Activated CD4-positive, alpha-beta T cell treated with anti-CD3 and anti-CD28 coated beads for 36 hours (primary cell): ENCODE measurements at regions of chr2 and their contacts with region 1.

Region 1: DNA sequence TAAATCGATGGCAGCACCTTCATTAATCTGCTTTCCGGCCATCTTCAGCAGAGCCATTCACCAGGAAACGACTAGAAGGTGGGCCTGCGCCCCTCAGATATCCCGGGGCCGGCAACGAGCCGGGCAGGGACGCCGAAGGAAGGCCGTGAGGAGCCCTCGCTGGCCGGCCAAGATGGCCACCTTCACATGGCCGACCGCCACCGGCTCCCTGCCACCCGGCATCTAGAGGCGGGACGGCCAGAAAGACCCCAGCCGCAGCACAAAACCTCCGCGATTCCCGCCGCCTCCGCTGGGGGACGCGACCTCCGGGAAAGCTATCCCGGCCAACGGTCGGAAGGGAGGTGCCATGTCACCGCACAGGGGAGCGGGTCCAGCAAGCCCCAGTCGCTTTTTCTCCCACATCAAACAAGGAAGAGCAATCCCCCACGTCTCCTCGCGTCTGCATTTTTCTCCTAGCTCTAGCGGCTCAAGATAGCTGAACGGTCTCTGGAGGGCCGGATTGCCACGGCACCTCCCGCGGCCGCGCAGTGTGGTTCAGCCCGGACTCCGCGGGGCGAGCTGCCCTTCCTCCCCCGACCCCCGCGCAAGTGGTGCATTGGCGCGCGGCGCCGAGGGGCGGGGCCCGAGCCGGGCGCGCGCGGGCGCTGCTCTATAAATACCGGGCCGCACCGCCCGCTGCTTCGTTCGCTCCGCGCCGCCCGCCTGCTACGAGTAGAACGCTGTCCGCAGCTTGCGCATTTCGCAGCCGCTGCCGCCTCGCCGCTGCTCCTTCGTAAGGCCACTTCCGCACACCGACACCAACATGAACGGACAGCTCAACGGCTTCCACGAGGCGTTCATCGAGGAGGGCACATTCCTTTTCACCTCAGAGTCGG is at the start of gene MAT2A:
- DNase-seq: peak; percentile 93
- ATAC-seq: peak; percentile 79
- H3K4me3 Mint-ChIP-seq: peak within 1 kb of the TSS; percentile 95
- H3K27ac Mint-ChIP-seq: peak within 1 kb of the TSS; percentile 99
- H3K4me1 Mint-ChIP-seq: peaks cover 43% of the 10 kb centered on the region
- H3K27me3 Mint-ChIP-seq: no peaks in the 10 kb centered on the region
- total RNA-seq, gene MAT2A: 226 to 259 TPM

Region 2: GRCh38 chr2:84654414-84654813 is 884.3 kb before region 1 on chr2:
- CTCF ChIA-PET with region 1: no interaction called
- POLR2A ChIA-PET with region 1: no interaction called
- intact Hi-C with region 1: no loop called
- DNase-seq: no peak
- ATAC-seq: no peak
- H3K4me3 Mint-ChIP-seq: no peak overlapping the region
- H3K27ac Mint-ChIP-seq: no peak overlapping the region
- H3K4me1 Mint-ChIP-seq: peaks cover 58% of the 10 kb centered on the region
- H3K27me3 Mint-ChIP-seq: no peaks in the 10 kb centered on the region

Region 3: GRCh38 chr2:84905181-84906107 is 633.3 kb before region 1 on chr2 and contains the start of gene TMSB10:
- CTCF ChIA-PET with region 1: no interaction called
- POLR2A ChIA-PET with region 1: no interaction called
- intact Hi-C with region 1: loop called in 1 of 2 experiments (anchors 5 kb)
- DNase-seq: peak; percentile 93
- ATAC-seq: peak; percentile 69
- H3K4me3 Mint-ChIP-seq: peak within 1 kb of the TSS; percentile 96
- H3K27ac Mint-ChIP-seq: peak within 1 kb of the TSS; percentile 89
- H3K4me1 Mint-ChIP-seq: peaks cover 57% of the 10 kb centered on the region
- H3K27me3 Mint-ChIP-seq: no peaks in the 10 kb centered on the region
- total RNA-seq, gene TMSB10: 2,345 to 2,742 TPM

Region 4: GRCh38 chr2:85354286-85355072 is 184.2 kb before region 1 on chr2 and contains the starts of genes ELMOD3 and RETSAT:
- CTCF ChIA-PET with region 1: interaction called, 3 read pairs
- POLR2A ChIA-PET with region 1: interaction called, 12 read pairs
- intact Hi-C with region 1: loop called (anchors 1 kb)
- DNase-seq: peak; percentile 98
- ATAC-seq: peak; percentile 100
- H3K4me3 Mint-ChIP-seq: peak within 1 kb of the TSS; percentile 89
- H3K27ac Mint-ChIP-seq: peak within 1 kb of the TSS; percentile 99
- H3K4me1 Mint-ChIP-seq: peaks cover 34% of the 10 kb centered on the region
- H3K27me3 Mint-ChIP-seq: no peaks in the 10 kb centered on the region
- total RNA-seq, gene ELMOD3: 11.2 to 12.9 TPM
- total RNA-seq, gene RETSAT: 18.1 to 18.7 TPM

Region 5: GRCh38 chr2:85551698-85552678 is 13.3 kb after region 1 on chr2:
- CTCF ChIA-PET with region 1: interaction called, 80 read pairs
- POLR2A ChIA-PET with region 1: interaction called, 19 read pairs
- intact Hi-C with region 1: loop called (anchors 1 to 2 kb)
- DNase-seq: peak; percentile 92
- ATAC-seq: peak; percentile 88
- H3K4me3 Mint-ChIP-seq: no peak overlapping the region
- H3K27ac Mint-ChIP-seq: no peak overlapping the region
- H3K4me1 Mint-ChIP-seq: peaks cover 2% of the 10 kb centered on the region
- H3K27me3 Mint-ChIP-seq: no peaks in the 10 kb centered on the region

Region 6: DNA sequence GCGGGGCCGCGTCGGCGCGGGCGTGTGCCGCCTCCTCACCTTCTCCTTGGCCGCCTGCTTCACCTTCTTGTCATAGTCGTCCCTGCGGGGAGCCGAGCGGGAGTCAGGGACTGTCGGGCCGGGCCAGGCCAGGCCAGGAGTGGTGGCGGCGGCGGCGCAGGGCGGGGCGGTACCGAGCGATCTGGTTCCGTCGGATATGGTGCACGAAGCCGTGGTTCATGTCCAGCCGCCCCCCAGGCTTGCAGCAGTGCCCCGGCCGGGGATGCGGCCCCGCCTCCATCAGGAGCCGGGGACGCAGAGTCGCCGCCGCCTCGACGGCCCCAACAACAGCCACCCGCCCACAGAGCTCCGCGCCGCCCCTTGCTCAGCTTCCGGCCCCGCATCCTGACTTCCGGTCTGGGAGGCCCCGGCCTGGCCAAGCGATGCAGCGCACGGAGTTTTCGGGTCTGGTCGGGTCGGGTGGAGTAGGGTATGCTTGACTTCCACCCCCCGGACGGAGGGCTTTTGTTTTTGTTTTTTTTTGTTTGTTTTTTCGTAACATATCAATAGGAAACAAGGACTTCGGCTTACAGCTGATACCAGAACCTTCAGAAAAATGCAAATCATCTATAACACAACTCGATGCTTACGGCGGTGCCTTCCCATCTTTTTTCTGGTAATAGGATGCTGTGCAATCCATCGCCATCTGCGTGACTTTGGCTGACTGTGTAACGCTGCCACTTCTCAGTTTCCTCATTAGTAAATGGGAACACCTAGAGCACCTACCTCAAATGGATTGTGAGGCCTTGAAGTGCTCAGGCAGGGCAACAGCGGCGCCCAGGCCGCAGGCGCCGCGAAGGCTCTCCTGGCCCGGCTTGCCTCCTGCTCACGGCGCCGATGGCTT is 73.2 kb after region 1 on chr2 and contains the start of gene C2orf68:
- CTCF ChIA-PET with region 1: no interaction called
- POLR2A ChIA-PET with region 1: interaction called, 4 read pairs
- intact Hi-C with region 1: loop called in 1 of 2 experiments (anchors 1 kb)
- DNase-seq: peak; percentile 94
- ATAC-seq: peak; percentile 76
- H3K4me3 Mint-ChIP-seq: peak within 1 kb of the TSS; percentile 97
- H3K27ac Mint-ChIP-seq: peak within 1 kb of the TSS; percentile 96
- H3K4me1 Mint-ChIP-seq: peaks cover 14% of the 10 kb centered on the region
- H3K27me3 Mint-ChIP-seq: no peaks in the 10 kb centered on the region
- total RNA-seq, gene C2orf68: 33.7 to 47.2 TPM

Region 7: DNA sequence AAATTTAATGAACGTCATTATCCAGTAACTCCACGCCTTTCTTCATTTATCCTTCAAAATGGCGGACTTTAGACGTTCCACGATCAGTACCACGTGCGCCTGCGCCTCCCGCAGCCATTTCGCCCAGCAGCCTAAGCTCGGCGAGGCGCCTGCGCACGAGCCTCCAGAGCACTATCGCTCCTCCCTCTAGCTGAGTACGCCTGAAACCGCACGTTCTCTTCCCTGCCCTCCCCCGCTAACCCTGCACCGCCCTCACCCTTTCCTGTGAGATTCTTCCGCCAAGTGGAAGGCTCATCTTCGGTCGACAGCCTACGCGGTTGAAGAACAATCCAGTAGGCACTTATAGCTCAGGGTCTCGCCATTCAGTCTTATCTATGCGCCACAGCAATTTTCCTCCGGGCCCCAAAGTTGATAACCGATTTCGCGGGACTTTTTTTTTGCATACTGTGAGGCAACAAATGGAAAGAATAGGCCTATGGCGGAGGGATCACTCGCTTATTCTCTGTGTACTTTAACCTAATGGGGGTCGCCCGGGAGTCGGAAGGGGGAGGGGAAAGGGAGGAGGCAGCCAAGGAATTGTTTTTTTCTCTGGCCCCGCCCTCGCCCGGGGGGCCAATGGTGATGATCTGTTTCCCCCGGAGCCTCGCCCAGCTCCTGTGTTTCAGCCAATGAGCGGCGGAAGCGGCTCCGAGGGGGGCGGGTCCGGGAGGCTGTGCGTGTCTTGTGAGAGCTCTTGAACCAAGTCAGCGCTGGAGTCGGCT is 902.1 kb after region 1 on chr2 and contains the start of gene KDM3A:
- CTCF ChIA-PET with region 1: no interaction called
- POLR2A ChIA-PET with region 1: no interaction called
- intact Hi-C with region 1: loop called in 1 of 2 experiments (anchors 2 kb)
- DNase-seq: peak; percentile 100
- ATAC-seq: peak; percentile 88
- H3K4me3 Mint-ChIP-seq: peak within 1 kb of the TSS; percentile 90
- H3K27ac Mint-ChIP-seq: peak within 1 kb of the TSS; percentile 99
- H3K4me1 Mint-ChIP-seq: peaks cover 37% of the 10 kb centered on the region
- H3K27me3 Mint-ChIP-seq: no peaks in the 10 kb centered on the region
- total RNA-seq, gene KDM3A: 68.9 to 82.9 TPM